ENCODE measurements at regions of chrX and their contacts with region 1.

Region 1: GRCh38 chrX:118853596-118853995 is 30.0 kb downstream of the ZCCHC12 start:
- DNase-seq: no peak
- ATAC-seq: no peak
- H3K4me3 ChIP-seq: no peak overlapping the region
- H3K27ac ChIP-seq: no peak overlapping the region
- H3K4me1 ChIP-seq: no peaks in the 10 kb centered on the region
- H3K27me3 ChIP-seq: no peaks in the 10 kb centered on the region

Region 2: GRCh38 chrX:118974088-118974907 is 120.7 kb after region 1 on chrX and contains the start of gene LONRF3:
- intact Hi-C with region 1: loop called (anchors 10 kb)
- DNase-seq: peak; percentile 84 to 92
- ATAC-seq: peak; percentile 77
- H3K4me3 ChIP-seq: peak within 1 kb of the TSS; percentile 1 to 37
- H3K27ac ChIP-seq: peak within 1 kb of the TSS in 1 of 2 donors; percentile 19
- H3K4me1 ChIP-seq: no peaks in the 10 kb centered on the region
- H3K27me3 ChIP-seq: no peaks in the 10 kb centered on the region
- total RNA-seq, gene LONRF3: 4.7 to 8.4 TPM